ENCODE measurements at regions of chr19 and their contacts with region 1.

Region 1: GRCh38 chr19:40570313-40571004 is 6.2 kb upstream of the SHKBP1 start:
- DNase-seq: peak; percentile 98
- ATAC-seq: peak; percentile 95
- H3K4me3 Mint-ChIP-seq: peak overlapping the region; percentile 70
- H3K27ac Mint-ChIP-seq: peak overlapping the region; percentile 81
- H3K4me1 Mint-ChIP-seq: peaks cover 22% of the 10 kb centered on the region
- H3K27me3 Mint-ChIP-seq: peaks cover 13% of the 10 kb centered on the region
- CTCF ChIP-seq: no peak

Region 2: DNA sequence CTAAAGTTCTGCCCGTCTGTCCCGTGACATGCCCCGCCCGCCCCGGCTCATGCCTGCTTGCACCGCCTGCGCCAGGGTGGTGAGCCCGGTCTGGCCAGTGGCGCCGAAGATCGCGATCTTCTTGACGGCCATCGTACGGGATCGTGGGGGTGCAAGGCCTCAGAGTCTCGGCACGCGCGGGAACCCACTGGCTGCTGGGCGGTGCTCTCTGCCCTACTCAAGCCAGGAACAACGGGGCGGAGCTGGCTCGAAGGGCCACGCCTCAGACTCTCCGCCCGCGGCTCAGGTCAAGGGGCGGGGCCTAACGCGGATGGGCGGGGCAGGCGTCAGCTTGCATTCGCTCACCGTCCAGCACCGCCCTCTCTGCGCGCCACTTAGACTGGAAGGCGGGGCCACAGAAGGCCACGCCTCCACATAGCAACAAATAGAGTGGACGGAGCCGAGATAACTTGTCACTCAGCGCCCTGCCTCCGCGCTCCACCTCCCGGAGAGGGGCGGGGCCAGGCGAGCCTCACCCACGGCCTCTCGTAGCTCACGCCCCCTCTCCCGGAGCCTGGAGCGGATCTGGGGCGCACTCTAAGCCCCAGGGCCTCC is 104.8 kb before region 1 on chr19 and contains the start of gene BLVRB:
- CTCF ChIA-PET with region 1: interaction called, 4 read pairs
- POLR2A ChIA-PET with region 1: interaction called, 10 read pairs
- intact Hi-C with region 1: no loop called
- DNase-seq: peak; percentile 99
- ATAC-seq: peak; percentile 89
- H3K4me3 Mint-ChIP-seq: peak within 1 kb of the TSS; percentile 81
- H3K27ac Mint-ChIP-seq: peak within 1 kb of the TSS; percentile 68
- H3K4me1 Mint-ChIP-seq: peaks cover 36% of the 10 kb centered on the region
- H3K27me3 Mint-ChIP-seq: peaks cover 14% of the 10 kb centered on the region
- CTCF ChIP-seq: no peak
- total RNA-seq, gene BLVRB: 12.3 and 14.6 TPM in 2 replicates

Region 3: DNA sequence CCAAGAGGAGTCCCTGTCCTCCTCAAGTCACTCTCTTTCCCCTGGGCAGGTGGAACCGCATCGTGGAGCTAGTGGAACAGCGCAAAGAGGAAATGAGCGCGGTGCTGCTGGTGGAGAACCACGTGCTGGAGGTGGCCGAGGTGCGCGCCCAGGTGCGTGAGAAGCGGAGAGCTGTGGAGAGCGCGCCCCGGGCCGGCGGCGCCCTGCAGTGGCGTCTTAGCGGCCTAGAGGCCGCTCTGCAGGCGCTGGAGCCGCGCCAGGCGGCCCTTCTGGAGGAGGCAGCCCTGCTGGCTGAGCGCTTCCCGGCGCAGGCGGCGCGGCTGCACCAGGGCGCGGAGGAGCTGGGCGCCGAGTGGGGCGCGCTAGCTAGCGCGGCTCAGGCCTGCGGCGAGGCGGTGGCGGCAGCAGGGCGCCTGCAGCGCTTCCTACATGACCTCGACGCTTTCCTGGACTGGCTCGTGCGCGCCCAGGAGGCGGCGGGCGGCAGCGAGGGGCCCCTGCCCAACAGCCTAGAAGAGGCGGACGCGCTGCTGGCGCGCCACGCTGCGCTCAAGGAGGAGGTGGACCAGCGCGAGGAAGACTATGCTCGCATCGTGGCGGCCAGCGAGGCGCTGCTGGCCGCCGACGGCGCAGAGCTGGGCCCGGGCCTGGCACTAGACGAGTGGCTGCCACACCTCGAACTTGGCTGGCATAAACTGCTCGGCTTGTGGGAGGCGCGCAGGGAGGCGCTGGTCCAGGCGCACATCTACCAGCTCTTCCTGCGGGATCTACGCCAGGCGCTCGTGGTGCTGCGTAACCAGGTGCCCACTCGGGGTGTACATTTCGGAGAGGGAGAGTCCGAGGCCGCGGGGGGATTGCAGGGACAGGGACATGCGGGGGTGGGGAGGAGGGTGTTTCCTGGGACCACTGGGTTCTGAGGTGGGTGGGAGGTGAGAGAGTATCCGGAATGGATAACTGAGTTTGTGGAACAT is 50.8 kb before region 1 on chr19:
- CTCF ChIA-PET with region 1: no interaction called
- POLR2A ChIA-PET with region 1: no interaction called
- intact Hi-C with region 1: no loop called
- DNase-seq: no peak
- ATAC-seq: no peak
- H3K4me3 Mint-ChIP-seq: no peak overlapping the region
- H3K27ac Mint-ChIP-seq: no peak overlapping the region
- H3K4me1 Mint-ChIP-seq: peaks cover 2% of the 10 kb centered on the region
- H3K27me3 Mint-ChIP-seq: peaks cover 25% of the 10 kb centered on the region
- CTCF ChIP-seq: no peak

Region 4: GRCh38 chr19:40549007-40549708 is 21.3 kb before region 1 on chr19:
- CTCF ChIA-PET with region 1: interaction called, 5 read pairs
- POLR2A ChIA-PET with region 1: no interaction called
- intact Hi-C with region 1: loop called (anchors 1 kb)
- DNase-seq: peak; percentile 52
- ATAC-seq: peak; percentile 85
- H3K4me3 Mint-ChIP-seq: no peak overlapping the region
- H3K27ac Mint-ChIP-seq: no peak overlapping the region
- H3K4me1 Mint-ChIP-seq: peaks cover 7% of the 10 kb centered on the region
- H3K27me3 Mint-ChIP-seq: peaks cover 38% of the 10 kb centered on the region
- CTCF ChIP-seq: no peak

Region 5: DNA sequence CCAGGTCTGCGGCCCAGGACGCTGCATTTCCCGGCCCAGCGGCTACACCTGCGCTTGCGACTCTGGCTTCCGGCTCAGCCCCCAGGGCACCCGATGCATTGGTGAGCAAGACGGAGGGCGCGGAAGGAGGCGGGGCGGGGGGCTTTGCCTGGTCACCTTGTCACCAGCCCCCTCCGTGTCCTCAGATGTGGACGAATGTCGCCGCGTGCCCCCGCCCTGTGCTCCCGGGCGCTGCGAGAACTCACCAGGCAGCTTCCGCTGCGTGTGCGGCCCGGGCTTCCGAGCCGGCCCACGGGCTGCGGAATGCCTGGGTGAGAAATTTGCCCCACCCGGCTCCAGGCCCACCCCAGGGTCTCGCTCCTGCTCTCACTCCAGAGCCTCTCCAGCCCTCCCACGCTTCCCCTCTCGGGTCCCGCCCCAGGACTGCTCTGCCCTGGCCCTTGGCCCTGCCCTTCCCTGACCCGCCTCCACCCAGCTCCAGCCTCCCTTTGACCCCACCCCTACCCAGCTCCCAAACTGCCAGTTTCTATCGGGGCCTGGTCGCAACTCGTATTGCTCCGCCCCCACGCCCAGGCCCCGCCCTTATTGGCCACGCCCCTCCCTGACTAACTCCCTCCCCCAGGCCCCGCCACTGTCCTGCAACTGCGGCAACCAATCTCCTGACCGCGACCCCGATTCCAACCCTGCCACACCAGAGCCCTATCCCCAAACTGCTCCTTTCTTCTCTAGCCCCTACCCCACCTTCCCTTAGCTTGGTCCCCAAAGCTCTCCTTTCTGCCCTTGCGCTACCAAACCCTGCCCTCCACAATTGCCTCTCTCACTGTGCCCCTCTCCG is 39.3 kb after region 1 on chr19:
- CTCF ChIA-PET with region 1: interaction called, 6 read pairs
- POLR2A ChIA-PET with region 1: interaction called, 24 read pairs
- intact Hi-C with region 1: loop called (anchors 1 kb)
- DNase-seq: peak; percentile 92
- ATAC-seq: peak; percentile 54
- H3K4me3 Mint-ChIP-seq: peak overlapping the region; percentile 88
- H3K27ac Mint-ChIP-seq: peak overlapping the region; percentile 94
- H3K4me1 Mint-ChIP-seq: peaks cover 60% of the 10 kb centered on the region
- H3K27me3 Mint-ChIP-seq: no peaks in the 10 kb centered on the region
- CTCF ChIP-seq: no peak

Region 6: DNA sequence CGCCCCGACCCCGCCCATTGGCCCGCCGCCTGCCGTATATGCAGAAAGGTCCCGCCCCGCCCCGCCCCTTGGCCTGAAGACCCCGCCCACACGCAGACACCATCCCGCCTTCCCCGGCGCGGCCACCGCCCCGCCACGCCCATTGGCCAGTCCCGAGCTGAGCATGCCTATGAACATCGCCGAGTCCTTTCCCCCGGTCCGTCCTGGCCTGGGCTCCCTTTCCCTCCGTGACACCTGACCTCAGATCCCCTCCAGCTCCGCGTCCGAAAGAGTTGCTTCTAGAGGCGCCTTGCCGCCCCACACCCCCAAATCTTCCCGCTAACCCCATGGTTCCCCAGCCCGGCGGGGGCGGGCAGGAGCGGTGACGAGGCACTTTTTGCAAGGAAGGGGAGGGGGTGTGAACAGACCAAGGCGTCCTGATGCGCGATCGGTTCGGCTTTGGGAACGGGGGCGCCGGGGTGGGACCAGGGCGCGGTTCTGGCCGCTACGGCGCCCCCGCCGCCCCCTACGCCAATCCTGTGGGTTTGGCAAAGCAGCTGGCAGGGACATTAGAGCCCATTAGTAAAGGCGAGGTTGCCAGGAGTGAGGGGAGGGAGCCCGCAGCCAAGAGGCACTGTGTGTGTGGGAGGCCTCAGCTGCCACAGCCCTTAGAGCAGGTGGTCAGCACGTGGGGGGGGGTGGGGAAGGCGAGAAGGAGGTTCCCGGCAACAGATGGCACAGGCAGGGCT is 120.4 kb after region 1 on chr19:
- CTCF ChIA-PET with region 1: no interaction called
- POLR2A ChIA-PET with region 1: no interaction called
- intact Hi-C with region 1: loop called (anchors 5 kb)
- DNase-seq: peak; percentile 76
- ATAC-seq: peak; percentile 78
- H3K4me3 Mint-ChIP-seq: peak overlapping the region; percentile 95
- H3K27ac Mint-ChIP-seq: peak overlapping the region; percentile 89
- H3K4me1 Mint-ChIP-seq: peaks cover 16% of the 10 kb centered on the region
- H3K27me3 Mint-ChIP-seq: no peaks in the 10 kb centered on the region
- CTCF ChIP-seq: no peak

Region 7: DNA sequence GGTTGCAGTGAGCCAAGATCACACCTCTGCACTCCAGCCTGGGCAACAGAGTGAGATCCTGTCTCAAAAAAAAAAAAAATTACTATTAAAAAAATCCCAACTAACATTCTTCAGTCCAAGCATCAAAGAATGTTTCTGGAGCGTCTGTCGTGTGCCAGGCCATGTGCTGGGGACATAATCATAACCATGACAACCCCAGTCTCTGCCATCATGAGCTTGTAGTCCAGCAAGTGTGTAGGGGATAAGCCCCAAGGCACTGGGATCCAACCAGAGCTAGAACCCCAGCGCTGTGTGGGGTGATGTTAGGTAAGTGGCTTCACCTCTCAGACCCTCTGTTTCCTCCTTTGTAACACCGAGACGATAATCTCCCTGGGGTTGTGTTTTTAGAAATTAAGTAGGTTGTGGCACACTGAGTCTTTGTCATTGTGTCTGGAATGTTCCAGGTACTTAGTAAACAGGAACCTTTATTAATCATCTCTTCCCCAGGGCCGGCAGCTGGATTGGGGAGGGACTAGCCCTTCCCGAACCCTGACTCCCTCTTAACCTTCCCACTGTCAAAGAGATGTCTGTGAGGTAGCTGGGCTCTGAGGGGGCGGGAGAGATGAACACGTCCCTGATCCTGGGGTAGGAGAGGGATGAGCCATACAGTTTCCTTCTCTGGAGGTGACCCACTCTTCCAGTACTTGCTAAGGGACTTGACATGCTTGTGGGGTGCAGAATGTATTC is 151.6 kb after region 1 on chr19:
- CTCF ChIA-PET with region 1: no interaction called
- POLR2A ChIA-PET with region 1: no interaction called
- intact Hi-C with region 1: no loop called
- DNase-seq: no peak
- ATAC-seq: no peak
- H3K4me3 Mint-ChIP-seq: no peak overlapping the region
- H3K27ac Mint-ChIP-seq: no peak overlapping the region
- H3K4me1 Mint-ChIP-seq: peaks cover 46% of the 10 kb centered on the region
- H3K27me3 Mint-ChIP-seq: no peaks in the 10 kb centered on the region
- CTCF ChIP-seq: no peak